Posterior vena cava (tissue), 2 donors: ENCODE measurements at regions of chrX and their contacts with region 1.

Region 1: GRCh38 chrX:34437586-34437985 is 219.5 kb downstream of the TMEM47 start:
- DNase-seq: no peak

Region 2: GRCh38 chrX:34197946-34198345 is 239.6 kb before region 1 on chrX:
- intact Hi-C with region 1: loop called in 1 of 2 experiments (anchors 10 kb)
- DNase-seq: no peak

Region 3: DNA sequence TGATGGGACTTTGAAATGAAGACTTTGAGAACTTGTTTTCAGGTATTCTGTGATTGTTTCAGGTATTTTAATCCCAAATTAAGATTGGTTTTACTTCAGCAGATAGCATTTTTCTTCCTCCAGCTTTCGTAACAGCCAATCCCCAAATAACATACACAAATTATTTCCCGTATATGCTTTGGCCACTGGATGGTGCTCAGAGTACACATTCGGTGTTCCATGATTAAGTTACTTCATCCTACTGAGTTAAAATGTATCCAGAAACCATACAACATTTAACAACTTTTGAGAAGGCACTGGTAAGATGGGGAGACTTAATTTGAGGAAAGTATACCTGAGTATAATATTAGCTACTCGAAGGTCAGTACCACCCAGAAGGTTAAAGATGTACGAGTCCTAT is 72.1 kb before region 1 on chrX:
- intact Hi-C with region 1: no loop called
- DNase-seq: no peak